Common myeloid progenitor, CD34-positive (primary cell): ENCODE measurements at regions of chr12 and their contacts with region 1.

Region 1: GRCh38 chr12:98532681-98533304 is 17.4 kb downstream of the TMPO start:
- DNase-seq: peak; percentile 79 to 86 (median 84)
- H3K4me3 ChIP-seq: no peak overlapping the region
- H3K27ac ChIP-seq: peak overlapping the region in 1 of 2 experiments; percentile 11
- H3K4me1 ChIP-seq: peaks cover 0 to 4% (median under 1%) of the 10 kb centered on the region in 4 experiments
- H3K27me3 ChIP-seq: no peaks in the 10 kb centered on the region

Region 2: GRCh38 chr12:98418357-98419075 is 114.3 kb before region 1 on chr12:
- CTCF ChIA-PET with region 1: interaction called, 78 read pairs
- POLR2A ChIA-PET with region 1: no interaction called
- DNase-seq: peak in 2 of 3 donors; percentile 34 to 50
- H3K4me3 ChIP-seq: no peak overlapping the region
- H3K27ac ChIP-seq: no peak overlapping the region
- H3K4me1 ChIP-seq: peaks cover 0 to 8% (median 6%) of the 10 kb centered on the region in 4 experiments
- H3K27me3 ChIP-seq: no peaks in the 10 kb centered on the region

Region 3: GRCh38 chr12:98424726-98425401 is 107.9 kb before region 1 on chr12:
- CTCF ChIA-PET with region 1: interaction called, 78 read pairs
- POLR2A ChIA-PET with region 1: no interaction called
- DNase-seq: peak; percentile 66 to 82 (median 76)
- H3K4me3 ChIP-seq: peak overlapping the region in 1 of 7 experiments; percentile 43
- H3K27ac ChIP-seq: no peak overlapping the region
- H3K4me1 ChIP-seq: peaks cover 0 to 7% (median 0%) of the 10 kb centered on the region in 4 experiments
- H3K27me3 ChIP-seq: no peaks in the 10 kb centered on the region

Region 4: DNA sequence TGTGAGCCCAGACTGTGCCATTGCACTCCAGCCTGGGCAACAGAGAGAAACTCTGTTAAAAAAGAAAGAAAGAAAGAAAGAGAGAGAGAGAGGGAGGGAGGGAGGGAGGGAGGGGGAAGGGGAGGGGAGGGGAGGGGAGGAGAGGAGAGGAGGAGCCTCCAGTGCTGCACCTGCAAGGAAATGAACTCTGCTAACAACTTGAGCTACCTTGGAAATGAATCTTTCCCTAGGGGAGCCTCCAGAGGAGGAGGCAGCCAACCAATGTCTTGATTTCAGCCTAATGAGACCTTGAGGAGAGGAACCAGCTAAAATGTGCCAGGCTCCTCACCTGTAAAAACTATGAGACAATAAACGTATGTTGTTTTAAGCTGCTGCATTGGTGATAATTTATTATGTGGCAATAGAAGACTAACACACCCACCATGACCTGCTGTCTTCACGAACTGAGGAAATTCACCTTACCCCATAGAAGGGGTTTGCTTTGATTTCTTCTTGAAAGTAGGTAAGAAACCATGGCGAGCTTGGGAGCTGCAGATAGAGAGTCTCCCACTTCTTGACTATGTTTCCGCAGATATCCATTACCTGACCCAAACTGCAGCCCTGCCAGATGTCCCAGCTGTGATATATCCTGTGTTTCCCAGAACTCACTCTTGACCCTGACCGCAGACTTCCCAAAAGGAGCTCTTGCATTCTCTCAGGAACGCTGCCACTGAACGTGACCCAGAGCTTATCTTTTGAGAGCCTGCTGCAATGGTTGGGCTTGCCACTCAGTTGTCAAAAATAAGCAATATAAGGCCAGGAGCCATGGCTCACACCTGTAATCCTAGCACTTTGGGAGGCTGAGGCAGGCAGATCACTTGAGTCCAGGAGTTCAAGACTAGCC is 48.9 kb before region 1 on chr12:
- CTCF ChIA-PET with region 1: no interaction called
- POLR2A ChIA-PET with region 1: no interaction called
- DNase-seq: no peak
- H3K4me3 ChIP-seq: no peak overlapping the region
- H3K27ac ChIP-seq: no peak overlapping the region
- H3K4me1 ChIP-seq: no peaks in the 10 kb centered on the region
- H3K27me3 ChIP-seq: no peaks in the 10 kb centered on the region

Region 5: DNA sequence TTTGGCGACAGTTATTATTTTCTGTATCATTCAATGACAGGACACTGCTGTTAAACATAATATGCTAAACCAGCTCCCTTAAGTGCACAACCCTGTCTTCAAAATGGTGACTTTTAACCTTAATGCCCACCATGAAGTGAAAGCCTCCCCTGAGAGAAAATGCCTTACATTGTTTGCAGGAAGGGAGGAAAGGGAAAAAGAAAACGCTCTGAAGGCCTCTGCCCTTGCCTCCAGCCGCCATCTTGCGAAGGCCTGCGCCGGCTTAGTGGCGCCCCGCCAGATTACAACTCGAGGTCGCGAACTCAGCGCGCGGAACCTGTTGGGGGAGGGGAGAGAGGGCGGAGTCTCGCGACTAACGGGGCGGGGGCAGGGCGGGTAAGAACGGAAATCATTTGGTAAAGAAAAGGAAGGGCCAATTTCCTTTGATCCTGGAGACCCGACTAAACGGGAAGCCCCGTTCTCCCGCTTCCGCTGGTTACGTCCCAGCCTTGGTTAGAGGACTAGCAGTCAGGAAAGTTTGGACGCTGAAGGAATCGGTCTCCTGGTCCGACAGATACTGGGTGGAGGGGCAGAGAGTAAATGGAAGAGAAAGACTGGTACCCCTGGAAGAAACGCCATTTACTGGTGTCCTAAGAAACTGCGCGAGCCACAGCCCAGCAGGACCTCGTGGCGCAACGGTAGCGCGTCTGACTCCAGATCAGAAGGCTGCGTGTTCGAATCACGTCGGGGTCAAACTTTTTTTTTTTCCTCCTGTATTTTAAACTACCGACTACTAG is 29.0 kb before region 1 on chr12:
- CTCF ChIA-PET with region 1: no interaction called
- POLR2A ChIA-PET with region 1: no interaction called
- DNase-seq: peak; percentile 94 to 97 (median 96)
- H3K4me3 ChIP-seq: peak overlapping the region; percentile 48 to 99 (median 97)
- H3K27ac ChIP-seq: peak overlapping the region; percentile 93 to 99
- H3K4me1 ChIP-seq: peaks cover 0 to 5% (median 2%) of the 10 kb centered on the region in 4 experiments
- H3K27me3 ChIP-seq: no peaks in the 10 kb centered on the region

Region 6: GRCh38 chr12:98516184-98516873 is 16.5 kb before region 1 on chr12:
- CTCF ChIA-PET with region 1: interaction called, 32 read pairs
- POLR2A ChIA-PET with region 1: no interaction called
- DNase-seq: peak; percentile 90 to 96 (median 95)
- H3K4me3 ChIP-seq: peak overlapping the region; percentile 93 to 100 (median 98)
- H3K27ac ChIP-seq: peak overlapping the region; percentile 86 to 95
- H3K4me1 ChIP-seq: peaks cover 12 to 38% (median 22%) of the 10 kb centered on the region in 4 experiments
- H3K27me3 ChIP-seq: no peaks in the 10 kb centered on the region

Region 7: GRCh38 chr12:98544751-98545150 is 12.0 kb after region 1 on chr12:
- CTCF ChIA-PET with region 1: interaction called, 43 read pairs
- POLR2A ChIA-PET with region 1: no interaction called
- DNase-seq: no peak
- H3K4me3 ChIP-seq: no peak overlapping the region
- H3K27ac ChIP-seq: no peak overlapping the region
- H3K4me1 ChIP-seq: no peaks in the 10 kb centered on the region
- H3K27me3 ChIP-seq: no peaks in the 10 kb centered on the region

Region 8: DNA sequence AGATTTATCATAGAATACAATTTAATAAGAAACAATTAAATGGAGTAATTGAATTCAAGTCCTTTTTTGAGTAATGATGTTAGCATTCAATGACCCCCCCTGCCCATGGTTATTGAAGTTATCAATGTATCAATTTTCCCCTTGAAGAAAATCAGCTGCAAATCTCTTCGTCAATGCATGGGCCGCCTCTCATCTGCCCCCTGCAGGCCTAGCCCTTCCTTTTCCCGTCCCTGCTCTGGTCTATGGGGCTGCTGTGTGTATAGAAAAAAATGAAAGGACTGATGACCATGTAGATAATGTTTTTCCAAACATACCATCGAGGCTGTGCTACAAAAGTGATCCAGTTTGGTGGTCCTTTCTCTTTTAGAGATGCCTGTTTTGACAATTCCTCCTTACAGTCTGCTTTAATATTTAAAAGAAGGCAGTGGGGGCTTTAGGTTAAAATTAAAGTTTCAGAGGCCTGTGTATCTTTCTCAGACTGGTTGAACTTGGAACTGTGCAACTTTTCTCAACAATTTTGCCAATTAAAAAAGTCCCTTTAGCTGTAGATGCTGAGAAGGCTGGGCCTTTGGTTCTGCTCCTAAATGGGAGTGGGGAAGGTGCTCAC is 210.7 kb after region 1 on chr12:
- CTCF ChIA-PET with region 1: no interaction called
- POLR2A ChIA-PET with region 1: no interaction called
- DNase-seq: peak; percentile 18 to 44 (median 38)
- H3K4me3 ChIP-seq: no peak overlapping the region
- H3K27ac ChIP-seq: no peak overlapping the region
- H3K4me1 ChIP-seq: peaks cover 0 to 12% (median 9%) of the 10 kb centered on the region in 4 experiments
- H3K27me3 ChIP-seq: peaks cover 12 to 53% (median 25%) of the 10 kb centered on the region in 5 experiments